ENCODE measurements at regions of chr20 and their contacts with region 1.

Region 1: GRCh38 chr20:40741507-40742106 is 52.6 kb upstream of the MAFB start:
- DNase-seq: no peak
- H3K4me3 ChIP-seq: no peak overlapping the region
- H3K27ac ChIP-seq: no peak overlapping the region
- H3K4me1 ChIP-seq: no peaks in the 10 kb centered on the region
- H3K27me3 ChIP-seq: peaks cover 0 to 29% (median 0%) of the 10 kb centered on the region in 4 donors
- CTCF ChIP-seq: peak in 5 of 6 experiments; percentile 42 to 66 (median 50)
- POLR2A ChIP-seq: no peak

Region 2: GRCh38 chr20:40638402-40638801 is 103.2 kb before region 1 on chr20:
- intact Hi-C with region 1: no loop called
- DNase-seq: no peak
- H3K4me3 ChIP-seq: no peak overlapping the region
- H3K27ac ChIP-seq: no peak overlapping the region
- H3K4me1 ChIP-seq: peaks cover 0 to 2% (median 0%) of the 10 kb centered on the region in 3 donors
- H3K27me3 ChIP-seq: no peaks in the 10 kb centered on the region
- CTCF ChIP-seq: no peak
- POLR2A ChIP-seq: no peak

Region 3: DNA sequence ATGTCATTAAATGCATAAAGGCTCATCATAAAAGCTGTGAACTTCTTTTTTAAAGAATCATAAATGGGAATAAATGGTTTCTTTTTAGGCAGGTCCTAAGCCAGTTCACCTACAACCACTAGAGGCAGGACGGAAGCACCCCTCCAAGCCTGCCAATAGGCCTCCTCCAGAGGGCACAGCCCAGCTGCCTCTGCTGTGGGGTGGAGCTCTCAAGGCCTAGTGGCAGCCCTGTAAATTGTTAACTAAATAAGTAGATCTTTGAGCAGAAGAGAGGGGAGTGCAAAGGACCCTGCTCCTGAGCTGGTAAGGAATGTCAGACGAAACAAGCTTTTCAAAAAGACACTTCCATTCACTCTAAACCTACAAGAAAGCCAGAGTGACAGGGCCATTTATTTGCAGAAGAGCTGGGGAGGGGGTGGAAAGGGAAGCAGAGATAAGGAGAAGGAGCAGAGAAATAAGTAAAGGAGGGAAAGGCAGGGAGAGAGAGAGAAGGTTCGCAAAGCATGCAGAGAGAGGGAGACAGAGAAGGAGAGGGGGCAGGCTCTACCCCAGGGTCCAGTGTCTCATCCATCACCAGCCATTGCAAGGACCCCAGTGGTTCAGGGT is 34.5 kb before region 1 on chr20:
- intact Hi-C with region 1: no loop called
- DNase-seq: no peak
- H3K4me3 ChIP-seq: no peak overlapping the region
- H3K27ac ChIP-seq: no peak overlapping the region
- H3K4me1 ChIP-seq: peaks cover 0 to 4% (median 0%) of the 10 kb centered on the region in 3 donors
- H3K27me3 ChIP-seq: peaks cover 0 to 36% (median 0%) of the 10 kb centered on the region in 4 donors
- CTCF ChIP-seq: peak in 1 of 6 experiments; percentile 20
- POLR2A ChIP-seq: no peak

Region 4: DNA sequence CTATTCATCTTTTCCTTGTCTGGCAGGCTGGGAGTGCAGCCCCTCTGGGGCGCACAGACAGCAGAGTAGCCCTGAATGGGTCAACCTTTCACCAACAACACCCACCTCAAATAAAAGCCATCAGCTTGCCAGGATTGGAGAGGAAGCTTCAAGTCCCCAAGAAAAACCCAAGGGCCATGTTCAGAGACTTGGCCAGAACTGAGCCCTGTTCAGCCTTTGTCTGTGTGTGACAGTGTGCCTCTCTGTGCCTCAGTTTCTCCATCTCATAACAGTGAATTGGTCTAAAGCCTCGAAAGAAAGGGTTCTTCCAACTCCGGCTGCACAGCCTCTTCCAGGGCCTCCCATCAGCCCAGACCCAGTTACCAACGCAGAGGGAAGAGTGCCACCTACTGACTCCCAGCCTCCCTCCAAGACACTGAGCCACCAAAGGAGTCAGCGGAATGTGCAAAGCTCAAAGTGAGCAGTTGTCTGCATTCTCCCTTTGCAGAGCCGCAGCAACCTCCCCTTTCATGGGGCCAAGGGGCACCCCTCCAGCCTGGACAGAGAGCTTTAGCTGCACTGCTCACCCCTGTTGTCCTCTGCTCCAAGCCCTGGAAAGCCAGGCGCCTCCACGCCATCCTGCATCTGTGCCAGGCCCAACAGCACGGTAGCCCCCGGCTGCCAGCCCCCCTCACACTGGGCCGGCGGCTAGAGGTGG is 204.3 kb after region 1 on chr20:
- intact Hi-C with region 1: loop called (anchors 10 kb)
- DNase-seq: no peak
- H3K4me3 ChIP-seq: no peak overlapping the region
- H3K27ac ChIP-seq: no peak overlapping the region
- H3K4me1 ChIP-seq: no peaks in the 10 kb centered on the region
- H3K27me3 ChIP-seq: peaks cover 0 to 25% (median 0%) of the 10 kb centered on the region in 4 donors
- CTCF ChIP-seq: peak in 5 of 6 experiments; percentile 30 to 67 (median 43)
- POLR2A ChIP-seq: no peak

Measured in esophagus squamous epithelium (tissue), 5 donors.